ENCODE measurements at regions of chr11 and their contacts with region 1.

Region 1: GRCh38 chr11:118145285-118146227 is 7.1 kb downstream of the SCN4B start:
- DNase-seq: peak; percentile 91
- ATAC-seq: peak; percentile 92

Region 2: DNA sequence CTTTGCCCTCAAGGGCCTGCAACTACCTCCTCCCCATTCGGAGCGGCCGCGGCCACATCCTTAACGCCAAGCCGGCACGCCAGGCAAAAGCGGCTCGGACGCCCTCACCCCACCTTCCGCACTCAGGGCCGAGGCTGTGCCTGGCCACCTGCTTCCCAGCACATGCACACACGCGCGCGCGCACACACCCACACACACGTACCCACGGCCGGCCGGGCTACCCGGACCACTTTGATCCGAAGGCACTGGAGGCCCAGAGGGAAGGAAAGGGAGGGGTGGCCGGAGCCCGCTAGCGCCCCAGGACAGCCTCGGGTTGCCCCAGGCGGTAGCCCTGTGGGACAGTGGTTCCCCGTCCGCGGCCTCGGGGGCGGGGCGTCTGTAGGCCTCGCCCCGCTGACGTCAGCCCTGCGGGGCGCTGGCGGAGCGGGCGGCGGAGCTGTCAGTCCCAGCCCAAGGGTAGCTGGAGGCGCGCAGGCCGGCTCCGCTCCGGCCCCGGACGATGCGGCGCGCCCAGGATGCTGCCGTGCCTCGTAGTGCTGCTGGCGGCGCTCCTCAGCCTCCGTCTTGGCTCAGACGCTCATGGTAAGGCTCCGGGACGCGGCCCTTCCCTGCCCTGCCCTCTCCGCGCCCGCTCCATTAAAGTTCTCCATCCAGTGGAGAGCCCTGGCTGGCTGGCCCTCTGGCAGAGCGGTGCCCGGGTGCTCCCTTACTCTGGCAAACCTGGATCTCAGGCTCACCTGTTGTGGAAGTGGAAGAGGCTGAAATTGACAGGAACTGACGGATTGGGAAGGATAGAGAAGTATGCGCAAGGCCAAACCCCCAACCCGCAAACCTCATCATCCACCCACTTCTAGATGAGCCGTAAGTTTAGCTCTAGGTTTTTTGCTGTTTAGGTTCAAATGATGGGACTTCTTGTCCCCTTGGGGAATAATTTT is 159.3 kb before region 1 on chr11 and contains the start of gene IL10RA:
- intact Hi-C with region 1: loop called (anchors 5 kb)
- DNase-seq: peak; percentile 93
- ATAC-seq: peak; percentile 97
- total RNA-seq, gene IL10RA: 6.2 TPM

Region 3: DNA sequence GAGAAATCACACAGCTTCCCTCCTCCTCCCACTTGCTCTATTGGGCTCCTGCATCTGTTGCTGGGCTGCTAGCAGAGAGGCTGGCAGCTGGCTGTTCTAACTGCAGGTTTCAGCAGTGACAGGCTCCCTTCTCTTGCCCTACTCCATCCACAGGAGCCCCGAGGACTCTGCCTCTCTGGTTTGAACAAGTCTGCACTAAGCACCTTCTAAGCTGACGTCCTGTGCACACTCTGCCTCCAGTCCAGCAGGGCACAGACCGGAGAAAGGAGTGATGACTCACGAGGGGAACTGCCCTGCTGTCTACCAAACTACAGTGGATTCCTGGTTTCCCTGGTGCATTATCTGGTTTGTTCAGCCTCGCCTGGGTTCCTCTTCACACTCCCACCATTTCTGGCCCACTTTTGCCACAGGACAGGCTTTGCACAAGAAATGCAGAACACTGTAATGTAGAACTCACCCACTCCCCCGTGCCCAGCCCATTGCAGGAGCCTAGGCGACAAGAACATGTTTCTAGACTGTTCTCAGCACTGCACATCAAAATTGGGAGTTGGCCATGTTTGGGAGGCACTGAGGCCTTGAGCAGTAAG is 133.4 kb before region 1 on chr11:
- intact Hi-C with region 1: no loop called
- DNase-seq: no peak
- ATAC-seq: peak; percentile 53

Region 4: DNA sequence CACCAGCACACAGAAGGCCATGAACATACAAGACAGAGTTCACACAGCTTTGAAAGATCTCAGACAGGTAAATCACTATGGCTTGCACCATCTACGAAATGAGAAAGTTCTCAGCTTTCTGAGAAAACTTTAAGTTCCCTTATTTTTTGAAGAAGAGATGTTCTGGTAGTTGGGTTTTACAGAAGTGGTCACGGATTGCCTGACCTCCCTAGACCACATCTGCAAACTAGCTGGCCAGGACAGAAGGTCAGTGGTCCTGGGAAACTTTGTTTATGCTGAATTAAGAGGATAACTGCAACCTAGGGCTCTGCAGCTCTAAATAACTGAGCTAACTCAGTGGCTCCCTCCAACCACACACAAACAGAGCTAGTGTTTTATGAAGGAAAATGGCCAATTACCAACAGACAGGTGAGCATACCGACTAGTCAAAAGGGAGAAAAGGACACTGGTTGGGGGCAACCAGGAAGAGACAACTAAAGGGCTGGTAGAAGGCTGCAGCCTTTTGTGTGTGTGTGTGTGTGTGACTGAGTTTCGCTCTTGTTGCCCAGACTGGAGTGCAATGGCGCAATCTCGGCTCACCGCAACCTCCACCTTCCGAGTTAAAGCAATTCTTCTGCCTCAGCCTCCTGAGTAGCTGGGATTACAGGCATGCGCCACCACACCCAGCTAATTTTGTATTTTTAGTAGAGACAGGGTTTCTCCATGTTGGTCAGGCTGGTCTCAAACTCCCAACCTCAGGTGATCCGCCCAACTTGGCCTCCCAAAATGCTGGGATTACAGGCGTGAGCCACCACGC is 39.4 kb after region 1 on chr11:
- intact Hi-C with region 1: no loop called
- DNase-seq: peak; percentile 55
- ATAC-seq: no peak